ENCODE measurements at regions of chr22 and their contacts with region 1.

Region 1: GRCh38 chr22:21735200-21736076 is at the start of gene YPEL1:
- DNase-seq: peak; percentile 92 to 96
- ATAC-seq: peak; percentile 86 to 88
- H3K4me3 ChIP-seq: peak within 1 kb of the TSS; percentile 61 to 74 (median 70)
- H3K27ac ChIP-seq: peak within 1 kb of the TSS; percentile 83 to 91 (median 87)
- H3K4me1 ChIP-seq: peaks cover 9 to 16% of the 10 kb centered on the region in 2 donors
- H3K27me3 ChIP-seq: no peaks in the 10 kb centered on the region
- CTCF ChIP-seq: peak in 3 of 5 experiments; percentile 12 to 26 (median 14)
- POLR2A ChIP-seq: peak; percentile 99 to 100
- total RNA-seq, gene YPEL1: 23.6 to 42.1 (median 36.4) TPM

Region 2: GRCh38 chr22:21837248-21837979 is 102.0 kb after region 1 on chr22:
- in situ Hi-C with region 1: loop called in 1 of 4 experiments (anchors 25 kb)
- intact Hi-C with region 1: no loop called
- DNase-seq: no peak
- ATAC-seq: peak; percentile 92 to 93
- H3K4me3 ChIP-seq: no peak overlapping the region
- H3K27ac ChIP-seq: peak overlapping the region; percentile 77 to 87 (median 81)
- H3K4me1 ChIP-seq: peaks cover 50 to 57% of the 10 kb centered on the region in 2 donors
- H3K27me3 ChIP-seq: no peaks in the 10 kb centered on the region
- CTCF ChIP-seq: no peak
- POLR2A ChIP-seq: no peak

Region 3: GRCh38 chr22:21867528-21868266 is 132.3 kb after region 1 on chr22 and contains the start of gene MAPK1:
- in situ Hi-C with region 1: no loop called
- intact Hi-C with region 1: loop called (anchors 2 kb)
- DNase-seq: peak; percentile 91
- ATAC-seq: peak; percentile 91 to 95
- H3K4me3 ChIP-seq: peak within 1 kb of the TSS; percentile 83 to 95 (median 90)
- H3K27ac ChIP-seq: peak within 1 kb of the TSS; percentile 86 to 93 (median 90)
- H3K4me1 ChIP-seq: peaks cover 35 to 43% of the 10 kb centered on the region in 2 donors
- H3K27me3 ChIP-seq: no peaks in the 10 kb centered on the region
- CTCF ChIP-seq: peak in 4 of 5 experiments; percentile 26 to 49 (median 42)
- POLR2A ChIP-seq: peak; percentile 94 to 95
- total RNA-seq, gene MAPK1: 39.8 to 79.5 (median 57.2) TPM

Measured in gastrocnemius medialis (tissue), 4 donors.